MCF 10A (cell line): ENCODE measurements at regions of chr10 and their contacts with region 1.

Region 1: GRCh38 chr10:87734987-87735827 is 75.5 kb downstream of the PAPSS2 start:
- DNase-seq: peak; percentile 61
- H3K4me3 Mint-ChIP-seq: no peak overlapping the region
- H3K27ac Mint-ChIP-seq: no peak overlapping the region
- H3K4me1 Mint-ChIP-seq: peaks cover 6% of the 10 kb centered on the region
- H3K27me3 Mint-ChIP-seq: no peaks in the 10 kb centered on the region
- CTCF ChIP-seq: peak; percentile 72

Region 2: DNA sequence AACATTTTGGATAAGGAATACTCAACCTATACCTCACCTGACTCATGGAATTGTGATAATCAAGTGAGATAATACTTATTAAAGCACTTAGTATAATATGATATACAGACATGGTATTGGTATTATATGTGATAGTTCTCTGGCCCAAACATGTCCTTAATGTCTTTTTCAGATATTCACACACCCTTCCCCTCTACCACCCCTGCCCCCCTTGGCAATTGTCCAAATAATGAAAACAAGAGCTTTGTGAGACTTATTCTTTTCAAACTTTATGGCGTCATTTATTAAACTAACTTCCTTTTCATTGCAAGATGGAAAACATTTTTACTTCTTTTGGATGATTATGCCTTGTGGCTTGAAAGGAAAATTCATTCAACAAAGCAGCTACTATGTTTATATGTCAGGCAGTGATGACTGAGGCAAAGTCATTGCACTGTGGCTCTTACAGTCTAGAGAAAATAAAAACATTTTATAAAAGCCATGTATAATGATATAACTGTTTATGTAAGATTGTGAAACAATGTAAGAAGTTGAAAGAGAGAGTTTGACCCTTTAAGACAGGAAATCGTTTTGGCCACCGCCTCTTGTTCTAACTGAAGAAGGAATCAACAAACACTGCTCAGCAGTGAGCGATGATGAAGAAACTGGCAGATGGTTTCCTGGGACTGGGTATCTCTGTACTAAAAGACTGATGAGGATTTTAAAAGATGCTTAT is 203.1 kb before region 1 on chr10:
- CTCF ChIA-PET with region 1: interaction called, 25 read pairs
- POLR2A ChIA-PET with region 1: interaction called, 3 read pairs
- intact Hi-C with region 1: loop called (anchors 1 kb)
- DNase-seq: peak; percentile 53
- H3K4me3 Mint-ChIP-seq: no peak overlapping the region
- H3K27ac Mint-ChIP-seq: no peak overlapping the region
- H3K4me1 Mint-ChIP-seq: no peaks in the 10 kb centered on the region
- H3K27me3 Mint-ChIP-seq: no peaks in the 10 kb centered on the region
- CTCF ChIP-seq: no peak

Region 3: GRCh38 chr10:87659571-87660483 is 75.4 kb before region 1 on chr10 and contains the start of gene PAPSS2:
- CTCF ChIA-PET with region 1: interaction called, 102 read pairs
- POLR2A ChIA-PET with region 1: interaction called, 6 read pairs
- intact Hi-C with region 1: loop called (anchors 1 kb)
- DNase-seq: peak; percentile 36
- H3K4me3 Mint-ChIP-seq: peak within 1 kb of the TSS; percentile 71
- H3K27ac Mint-ChIP-seq: peak within 1 kb of the TSS; percentile 39
- H3K4me1 Mint-ChIP-seq: peaks cover 4% of the 10 kb centered on the region
- H3K27me3 Mint-ChIP-seq: peaks cover 8% of the 10 kb centered on the region
- CTCF ChIP-seq: no peak
- total RNA-seq, gene PAPSS2: 1.0 and 1.4 TPM in 2 replicates

Region 4: GRCh38 chr10:87684001-87684638 is 51.1 kb before region 1 on chr10:
- CTCF ChIA-PET with region 1: interaction called, 14 read pairs
- POLR2A ChIA-PET with region 1: no interaction called
- intact Hi-C with region 1: no loop called
- DNase-seq: no peak
- H3K4me3 Mint-ChIP-seq: no peak overlapping the region
- H3K27ac Mint-ChIP-seq: no peak overlapping the region
- H3K4me1 Mint-ChIP-seq: no peaks in the 10 kb centered on the region
- H3K27me3 Mint-ChIP-seq: no peaks in the 10 kb centered on the region
- CTCF ChIP-seq: no peak

Region 5: GRCh38 chr10:87721781-87722180 is 13.4 kb before region 1 on chr10:
- CTCF ChIA-PET with region 1: interaction called, 11 read pairs
- POLR2A ChIA-PET with region 1: interaction called, 3 read pairs
- intact Hi-C with region 1: no loop called
- DNase-seq: no peak
- H3K4me3 Mint-ChIP-seq: no peak overlapping the region
- H3K27ac Mint-ChIP-seq: no peak overlapping the region
- H3K4me1 Mint-ChIP-seq: no peaks in the 10 kb centered on the region
- H3K27me3 Mint-ChIP-seq: no peaks in the 10 kb centered on the region
- CTCF ChIP-seq: no peak